Naive thymus-derived CD4-positive, alpha-beta T cell (primary cell): ENCODE measurements at regions of chr1 and their contacts with region 1.

Region 1: DNA sequence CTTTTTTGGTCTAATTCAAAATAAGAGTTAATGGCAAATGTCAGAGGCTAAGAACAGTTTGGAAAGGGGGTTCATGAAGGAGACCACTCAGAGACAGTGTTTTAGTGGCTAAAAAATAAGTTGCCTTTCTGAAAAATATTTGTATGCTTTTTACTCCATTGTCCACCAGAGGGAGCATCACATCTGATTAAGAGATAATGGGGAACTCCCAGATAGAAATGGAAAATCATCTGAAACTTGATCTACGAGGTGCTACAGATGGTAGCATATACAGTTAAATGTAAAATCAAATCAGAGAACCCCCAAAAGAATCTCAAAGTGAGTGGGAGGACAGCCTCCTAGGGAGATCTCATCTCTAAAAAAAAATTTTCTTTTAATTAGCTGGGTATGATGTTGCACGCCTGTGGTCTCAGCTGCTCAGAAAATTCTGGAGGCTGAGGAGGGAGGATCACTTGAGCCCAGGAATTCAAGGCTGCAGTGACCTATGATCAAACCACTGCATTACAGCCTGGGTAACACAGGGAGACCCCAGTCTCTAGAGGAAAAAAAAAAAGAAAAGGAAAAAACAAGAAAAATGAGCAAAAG is 9.7 kb downstream of the SMYD3 start:
- DNase-seq: peak in 7 of 9 donors; percentile 46 to 74 (median 65)
- ATAC-seq: peak; percentile 86
- H3K4me3 ChIP-seq: no peak overlapping the region
- H3K4me3 Mint-ChIP-seq: no peak overlapping the region
- H3K27ac ChIP-seq: no peak overlapping the region
- H3K27ac Mint-ChIP-seq: peak overlapping the region in 4 of 9 donors; percentile 33 to 74 (median 49)
- H3K4me1 ChIP-seq: peaks cover 0 to 4% of the 10 kb centered on the region in 2 donors
- H3K4me1 Mint-ChIP-seq: peaks cover 7 to 25% (median 21%) of the 10 kb centered on the region in 7 donors
- H3K27me3 ChIP-seq: no peaks in the 10 kb centered on the region
- H3K27me3 Mint-ChIP-seq: no peaks in the 10 kb centered on the region

Region 2: DNA sequence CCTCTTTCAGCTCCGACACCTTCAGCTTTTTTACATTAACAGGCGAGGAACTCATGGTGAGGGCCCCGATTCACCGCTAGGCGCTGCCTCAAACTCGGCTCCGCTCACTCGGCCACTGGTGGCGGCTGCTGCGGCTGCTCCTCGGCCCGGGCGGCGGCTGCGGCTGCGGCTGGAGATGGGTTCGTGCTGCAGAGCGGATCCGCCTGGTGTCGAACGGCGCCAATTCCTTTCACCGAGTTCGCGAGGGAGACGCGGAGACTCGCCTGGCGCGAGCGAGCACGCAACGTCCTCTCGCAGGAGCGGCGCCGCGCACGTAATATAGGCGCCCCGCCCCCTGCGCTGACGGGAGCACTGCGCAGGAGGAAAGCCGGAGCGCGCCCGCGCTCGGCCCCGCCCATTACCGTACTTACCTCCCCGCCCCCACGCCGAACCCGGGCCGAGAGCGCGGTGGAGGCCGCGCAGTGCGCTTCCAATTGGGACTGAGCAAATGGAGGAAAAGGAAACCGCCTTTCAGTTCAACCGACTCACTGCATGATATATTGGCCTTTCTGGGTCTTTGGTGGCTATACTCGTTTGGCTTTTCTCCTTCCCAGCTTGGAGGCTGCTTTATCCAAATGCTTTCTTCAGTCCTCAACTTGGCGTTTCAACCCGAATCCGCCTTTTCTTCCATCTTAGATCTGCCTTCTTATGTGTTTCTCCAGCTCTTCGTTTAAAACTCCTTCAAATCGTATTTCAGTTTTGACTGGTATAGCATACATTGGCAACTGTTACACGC is 1633.0 kb before region 1 on chr1 and contains the start of gene HNRNPU:
- CTCF ChIA-PET with region 1: no interaction called
- POLR2A ChIA-PET with region 1: no interaction called
- intact Hi-C with region 1: loop called in 1 of 2 experiments (anchors 10 kb)
- DNase-seq: peak; percentile 93 to 99 (median 98)
- ATAC-seq: peak; percentile 81
- H3K4me3 ChIP-seq: peak within 1 kb of the TSS; percentile 78
- H3K4me3 Mint-ChIP-seq: peak within 1 kb of the TSS; percentile 86 to 98 (median 98)
- H3K27ac ChIP-seq: peak within 1 kb of the TSS; percentile 100
- H3K27ac Mint-ChIP-seq: peak within 1 kb of the TSS; percentile 93 to 100 (median 98)
- H3K4me1 ChIP-seq: peaks cover 23 to 25% of the 10 kb centered on the region in 2 donors
- H3K4me1 Mint-ChIP-seq: peaks cover 39 to 56% (median 51%) of the 10 kb centered on the region in 7 donors
- H3K27me3 ChIP-seq: no peaks in the 10 kb centered on the region
- H3K27me3 Mint-ChIP-seq: peaks cover 0 to 3% (median 0%) of the 10 kb centered on the region in 5 donors
- total RNA-seq, gene HNRNPU: 378 to 509 (median 428) TPM

Region 3: GRCh38 chr1:246012341-246012740 is 485.1 kb before region 1 on chr1:
- CTCF ChIA-PET with region 1: interaction called, 3 read pairs
- POLR2A ChIA-PET with region 1: no interaction called
- intact Hi-C with region 1: loop called in 1 of 2 experiments (anchors 1 kb)
- DNase-seq: peak in 5 of 9 donors; percentile 14 to 30 (median 22)
- ATAC-seq: peak; percentile 50
- H3K4me3 ChIP-seq: no peak overlapping the region
- H3K4me3 Mint-ChIP-seq: no peak overlapping the region
- H3K27ac ChIP-seq: no peak overlapping the region
- H3K27ac Mint-ChIP-seq: peak overlapping the region in 2 of 9 donors; percentile 13 to 49
- H3K4me1 ChIP-seq: no peaks in the 10 kb centered on the region
- H3K4me1 Mint-ChIP-seq: peaks cover 0 to 3% (median 0%) of the 10 kb centered on the region in 7 donors
- H3K27me3 ChIP-seq: no peaks in the 10 kb centered on the region
- H3K27me3 Mint-ChIP-seq: no peaks in the 10 kb centered on the region

Region 4: GRCh38 chr1:246460406-246460805 is 37.0 kb before region 1 on chr1:
- CTCF ChIA-PET with region 1: no interaction called
- POLR2A ChIA-PET with region 1: no interaction called
- intact Hi-C with region 1: no loop called
- DNase-seq: no peak
- ATAC-seq: no peak
- H3K4me3 ChIP-seq: no peak overlapping the region
- H3K4me3 Mint-ChIP-seq: no peak overlapping the region
- H3K27ac ChIP-seq: no peak overlapping the region
- H3K27ac Mint-ChIP-seq: no peak overlapping the region
- H3K4me1 ChIP-seq: no peaks in the 10 kb centered on the region
- H3K4me1 Mint-ChIP-seq: peaks cover 6 to 39% (median 30%) of the 10 kb centered on the region in 7 donors
- H3K27me3 ChIP-seq: no peaks in the 10 kb centered on the region
- H3K27me3 Mint-ChIP-seq: no peaks in the 10 kb centered on the region

Region 5: GRCh38 chr1:246532519-246532918 is 35.1 kb after region 1 on chr1:
- CTCF ChIA-PET with region 1: interaction called, 3 read pairs
- POLR2A ChIA-PET with region 1: no interaction called
- intact Hi-C with region 1: loop called in 1 of 2 experiments (anchors 2 kb)
- DNase-seq: no peak
- ATAC-seq: no peak
- H3K4me3 ChIP-seq: no peak overlapping the region
- H3K4me3 Mint-ChIP-seq: no peak overlapping the region
- H3K27ac ChIP-seq: no peak overlapping the region
- H3K27ac Mint-ChIP-seq: no peak overlapping the region
- H3K4me1 ChIP-seq: no peaks in the 10 kb centered on the region
- H3K4me1 Mint-ChIP-seq: peaks cover 0 to 7% (median under 1%) of the 10 kb centered on the region in 7 donors
- H3K27me3 ChIP-seq: no peaks in the 10 kb centered on the region
- H3K27me3 Mint-ChIP-seq: peaks cover 0 to 11% (median 0%) of the 10 kb centered on the region in 5 donors

Region 6: DNA sequence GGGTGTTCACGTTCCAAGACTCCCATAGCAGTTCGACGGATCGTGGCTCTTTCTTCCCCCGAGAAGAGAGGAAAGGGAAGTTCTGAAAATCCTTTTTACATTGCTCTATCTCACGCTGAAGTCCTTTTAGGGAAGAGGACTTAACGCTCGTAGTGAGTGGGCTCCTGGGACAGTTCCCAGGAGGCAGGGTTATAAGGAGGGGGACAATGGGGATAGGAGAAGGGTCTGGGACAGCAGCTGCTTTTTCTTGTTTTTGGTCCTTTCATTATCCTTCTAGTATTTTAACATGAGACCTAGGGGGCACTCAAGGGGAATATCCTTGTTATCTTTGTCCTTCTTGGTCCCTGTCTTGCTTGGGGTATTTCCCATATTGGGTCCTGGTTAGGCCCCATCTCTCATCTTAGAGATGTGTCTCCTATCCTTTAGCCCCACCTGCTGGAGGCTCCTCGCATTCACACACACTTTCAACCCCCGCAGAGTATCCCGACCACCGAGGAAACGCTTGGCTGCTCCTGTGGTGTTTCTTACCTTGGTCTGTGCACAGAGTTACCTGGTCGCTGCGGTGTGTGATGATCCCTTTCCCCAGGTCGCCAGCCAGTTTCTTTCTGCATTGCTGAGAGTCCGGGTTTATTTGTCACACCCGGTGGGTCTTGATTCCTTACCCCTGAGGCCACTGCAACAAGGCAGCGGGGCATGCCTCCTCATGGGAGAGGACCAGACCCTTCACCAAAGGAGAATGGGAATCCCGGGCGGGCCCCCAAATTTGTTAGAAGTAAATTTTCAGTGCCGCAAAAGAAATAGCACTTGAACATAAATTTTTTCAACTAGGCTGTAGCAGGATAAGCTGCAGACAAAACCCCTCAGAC is 256.5 kb after region 1 on chr1:
- CTCF ChIA-PET with region 1: no interaction called
- POLR2A ChIA-PET with region 1: interaction called, 3 read pairs
- intact Hi-C with region 1: loop called (anchors 1 kb)
- DNase-seq: peak; percentile 20 to 55 (median 44)
- ATAC-seq: peak; percentile 81
- H3K4me3 ChIP-seq: no peak overlapping the region
- H3K4me3 Mint-ChIP-seq: no peak overlapping the region
- H3K27ac ChIP-seq: no peak overlapping the region
- H3K27ac Mint-ChIP-seq: no peak overlapping the region
- H3K4me1 ChIP-seq: no peaks in the 10 kb centered on the region
- H3K4me1 Mint-ChIP-seq: no peaks in the 10 kb centered on the region
- H3K27me3 ChIP-seq: no peaks in the 10 kb centered on the region
- H3K27me3 Mint-ChIP-seq: no peaks in the 10 kb centered on the region

Region 7: DNA sequence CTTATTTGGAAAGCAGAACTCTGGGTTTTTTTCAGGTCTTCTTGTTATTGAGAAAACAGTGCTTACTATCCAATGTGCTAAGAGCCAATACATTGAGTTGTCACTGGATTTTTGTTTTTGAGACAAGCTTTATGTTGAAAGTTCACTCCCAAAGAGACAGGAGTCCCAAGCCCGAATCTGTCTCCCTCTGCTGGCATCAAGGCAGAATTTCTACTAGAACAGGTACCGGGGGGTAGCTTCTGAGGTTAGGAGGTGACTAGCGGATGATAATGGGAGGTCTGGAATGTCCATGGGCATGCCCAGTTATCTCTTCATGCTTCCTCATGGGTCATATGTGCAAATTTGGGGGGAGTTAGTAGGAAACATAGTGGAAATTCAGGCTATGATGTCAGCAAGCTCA is 649.2 kb after region 1 on chr1:
- CTCF ChIA-PET with region 1: no interaction called
- POLR2A ChIA-PET with region 1: no interaction called
- intact Hi-C with region 1: no loop called
- DNase-seq: no peak
- ATAC-seq: no peak
- H3K4me3 ChIP-seq: no peak overlapping the region
- H3K4me3 Mint-ChIP-seq: no peak overlapping the region
- H3K27ac ChIP-seq: no peak overlapping the region
- H3K27ac Mint-ChIP-seq: no peak overlapping the region
- H3K4me1 ChIP-seq: no peaks in the 10 kb centered on the region
- H3K4me1 Mint-ChIP-seq: peaks cover 0 to 3% (median 0%) of the 10 kb centered on the region in 7 donors
- H3K27me3 ChIP-seq: no peaks in the 10 kb centered on the region
- H3K27me3 Mint-ChIP-seq: no peaks in the 10 kb centered on the region